Aorta (tissue), 5 donors: ENCODE measurements at regions of chr1 and their contacts with region 1.

Region 1: GRCh38 chr1:228902781-228903433 is 167.6 kb downstream of the RHOU start:
- DNase-seq: peak; percentile 89 to 93
- ATAC-seq: peak; percentile 89
- H3K4me3 ChIP-seq: no peak overlapping the region
- H3K27ac ChIP-seq: peak overlapping the region in 1 of 2 donors; percentile 82
- H3K4me1 ChIP-seq: no peaks in the 10 kb centered on the region
- H3K27me3 ChIP-seq: no peaks in the 10 kb centered on the region

Region 2: GRCh38 chr1:228860911-228861831 is 41.7 kb before region 1 on chr1:
- intact Hi-C with region 1: loop called in 1 of 2 experiments (anchors 2 kb)
- DNase-seq: no peak
- ATAC-seq: peak; percentile 63
- H3K4me3 ChIP-seq: no peak overlapping the region
- H3K27ac ChIP-seq: no peak overlapping the region
- H3K4me1 ChIP-seq: peaks cover 0 to 1% of the 10 kb centered on the region in 2 donors
- H3K27me3 ChIP-seq: no peaks in the 10 kb centered on the region

Region 3: DNA sequence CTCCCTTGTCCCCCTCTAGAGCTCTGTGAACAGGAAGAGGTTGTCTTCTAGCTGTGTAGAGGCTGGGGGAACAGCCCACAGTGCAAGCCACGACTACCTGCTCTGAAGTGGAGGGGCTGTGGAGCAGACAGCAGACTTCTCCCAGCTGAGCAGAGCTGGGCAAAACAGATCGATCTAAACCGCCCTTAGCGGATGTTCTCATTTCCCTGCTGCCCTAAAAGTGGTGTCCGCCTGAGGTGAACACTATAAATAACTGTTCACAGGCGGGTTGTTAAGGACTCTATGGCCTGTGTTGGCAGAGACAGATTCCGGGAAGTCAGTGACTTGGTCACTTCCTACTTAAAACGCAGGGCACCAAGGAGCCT is 35.6 kb after region 1 on chr1:
- intact Hi-C with region 1: loop called in 1 of 2 experiments (anchors 5 kb)
- DNase-seq: peak in 1 of 2 donors; percentile 69
- ATAC-seq: peak; percentile 83
- H3K4me3 ChIP-seq: no peak overlapping the region
- H3K27ac ChIP-seq: peak overlapping the region; percentile 78 to 99
- H3K4me1 ChIP-seq: no peaks in the 10 kb centered on the region
- H3K27me3 ChIP-seq: no peaks in the 10 kb centered on the region

Region 4: GRCh38 chr1:229087339-229087738 is 184.4 kb after region 1 on chr1:
- intact Hi-C with region 1: loop called in 1 of 2 experiments (anchors 10 kb)
- DNase-seq: peak in 1 of 2 donors; percentile 52
- ATAC-seq: peak; percentile 69
- H3K4me3 ChIP-seq: no peak overlapping the region
- H3K27ac ChIP-seq: peak overlapping the region; percentile 33 to 55
- H3K4me1 ChIP-seq: peaks cover 3 to 5% of the 10 kb centered on the region in 2 donors
- H3K27me3 ChIP-seq: no peaks in the 10 kb centered on the region

Region 5: DNA sequence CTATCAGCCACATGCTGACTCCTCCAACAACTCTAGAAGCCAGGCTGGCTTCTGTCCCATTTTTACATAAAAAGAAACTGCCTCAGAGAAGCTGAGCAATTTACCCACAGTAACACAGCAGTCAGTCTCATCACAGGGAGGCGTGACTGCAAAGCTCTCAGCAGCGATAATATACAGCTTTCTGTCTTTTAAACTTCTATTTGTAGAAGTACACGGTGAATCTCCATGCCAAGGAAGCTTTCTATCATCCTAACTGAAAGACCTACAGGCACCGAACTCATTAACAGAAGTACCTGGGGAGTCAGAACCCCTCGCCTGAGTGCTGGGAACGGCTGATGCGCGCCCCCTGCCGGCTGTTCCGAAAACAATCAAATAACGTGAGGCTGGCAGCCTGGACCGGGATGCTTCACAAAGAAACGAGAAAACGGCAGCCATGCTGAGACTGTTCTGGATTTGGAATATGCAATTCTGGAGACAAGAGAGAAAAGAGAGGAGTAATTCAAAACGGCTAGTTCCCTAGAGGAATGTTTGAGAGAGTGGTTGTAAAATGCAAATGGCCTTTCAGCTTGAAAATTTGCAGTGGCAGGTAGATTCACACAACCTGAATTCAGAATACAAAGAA is 324.5 kb after region 1 on chr1:
- intact Hi-C with region 1: loop called in 1 of 2 experiments (anchors 10 kb)
- DNase-seq: peak; percentile 84 to 94
- ATAC-seq: peak; percentile 72
- H3K4me3 ChIP-seq: no peak overlapping the region
- H3K27ac ChIP-seq: no peak overlapping the region
- H3K4me1 ChIP-seq: peaks cover 0 to 2% of the 10 kb centered on the region in 2 donors
- H3K27me3 ChIP-seq: no peaks in the 10 kb centered on the region